GM10248 (cell line): ENCODE measurements at regions of chr4 and their contacts with region 1.

Region 1: GRCh38 chr4:109424093-109424841 is 9.3 kb upstream of the SEC24B start:
- DNase-seq: no peak
- CTCF ChIP-seq: no peak

Region 2: GRCh38 chr4:109411964-109412363 is 12.3 kb before region 1 on chr4:
- CTCF ChIA-PET with region 1: interaction called, 11 read pairs
- POLR2A ChIA-PET with region 1: no interaction called
- DNase-seq: no peak
- CTCF ChIP-seq: no peak

Region 3: DNA sequence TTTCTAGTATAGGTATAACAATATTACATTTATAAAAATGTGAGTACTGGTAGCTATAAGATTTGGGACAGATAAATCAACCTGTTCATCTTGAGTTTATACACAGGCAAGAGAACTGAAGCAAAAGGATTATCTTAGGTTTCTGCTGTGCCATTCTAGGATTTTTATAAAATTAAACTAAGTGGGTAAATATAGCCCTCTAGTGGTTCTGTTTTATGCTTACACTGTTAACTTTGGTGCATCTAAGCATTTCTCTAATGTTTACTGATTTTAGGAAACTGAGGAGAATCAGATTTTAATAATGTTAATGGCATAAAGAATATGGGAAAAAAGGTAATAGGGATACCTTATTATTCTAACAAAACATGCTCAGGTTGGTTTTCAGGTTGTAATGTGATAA is 402.5 kb after region 1 on chr4:
- CTCF ChIA-PET with region 1: interaction called, 27 read pairs
- POLR2A ChIA-PET with region 1: no interaction called
- DNase-seq: peak; percentile 18
- CTCF ChIP-seq: peak; percentile 37

Region 4: GRCh38 chr4:109977854-109978501 is 553.7 kb after region 1 on chr4:
- CTCF ChIA-PET with region 1: interaction called, 30 read pairs
- POLR2A ChIA-PET with region 1: no interaction called
- DNase-seq: no peak
- CTCF ChIP-seq: peak; percentile 45